PC-3 (cell line): ENCODE measurements at regions of chr3 and their contacts with region 1.

Region 1: DNA sequence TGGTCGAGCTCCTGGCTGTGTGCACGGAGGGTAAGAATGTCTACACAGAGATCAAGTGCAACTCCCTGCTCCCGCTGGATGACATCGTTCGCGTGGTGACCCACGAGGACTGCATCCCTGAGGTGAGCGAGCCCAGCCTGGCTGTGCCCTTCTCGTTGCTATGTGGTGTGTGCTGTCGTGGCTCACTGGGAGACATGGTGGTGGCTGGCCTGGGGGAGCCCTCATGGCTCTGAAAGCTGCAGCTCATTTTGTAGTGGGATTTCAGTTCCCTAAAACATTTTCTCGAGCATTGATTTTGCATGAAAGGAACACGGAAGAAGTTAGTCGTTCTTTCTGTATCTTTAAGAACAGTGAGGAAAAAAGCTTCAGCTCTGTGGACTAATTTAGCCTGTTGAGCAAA is 200.5 kb downstream of the ITPR1 start:
- DNase-seq: no peak
- ATAC-seq: no peak
- H3K4me3 ChIP-seq: no peak overlapping the region
- H3K27ac ChIP-seq: no peak overlapping the region
- H3K4me1 ChIP-seq: peaks cover 27% of the 10 kb centered on the region
- H3K27me3 ChIP-seq: no peaks in the 10 kb centered on the region
- CTCF ChIP-seq: no peak

Region 2: DNA sequence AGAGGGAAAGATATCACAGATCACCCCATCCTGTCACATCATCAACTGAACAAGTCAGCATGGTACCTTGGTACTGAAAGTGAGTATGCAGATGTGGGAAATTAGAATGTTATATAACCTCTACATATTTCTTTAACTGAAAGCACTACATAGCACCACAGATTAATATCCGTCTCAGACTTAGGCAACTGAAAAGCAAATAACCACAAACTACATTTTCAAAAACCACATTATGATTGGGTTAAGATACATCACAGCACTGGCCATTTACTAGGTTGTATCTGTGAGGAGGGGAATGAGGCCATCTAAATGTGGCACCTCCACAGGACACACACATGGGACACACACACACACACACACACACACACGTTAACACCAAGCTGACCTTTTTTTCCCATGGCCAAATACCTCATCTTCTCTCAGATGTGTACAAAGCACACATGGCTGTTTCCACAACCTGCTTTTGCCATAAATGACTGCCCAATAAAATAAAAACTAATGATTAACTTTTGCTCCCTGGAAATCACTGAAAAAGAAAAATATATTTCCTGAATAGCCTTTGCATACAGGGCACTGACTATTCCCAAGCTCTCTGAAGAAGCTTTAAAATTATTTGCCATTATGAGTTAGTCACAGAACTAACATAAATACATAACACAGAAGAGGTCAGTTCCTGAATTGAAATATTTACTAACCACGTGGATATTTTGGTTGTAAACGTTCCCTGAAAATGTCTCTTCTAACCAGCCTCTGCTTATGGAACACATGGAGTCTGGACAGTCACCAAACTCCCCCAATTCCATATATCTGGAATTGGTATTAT is 286.7 kb before region 1 on chr3:
- CTCF ChIA-PET with region 1: no interaction called
- POLR2A ChIA-PET with region 1: no interaction called
- intact Hi-C with region 1: loop called (anchors 5 kb)
- DNase-seq: peak; percentile 76
- ATAC-seq: peak; percentile 86
- H3K4me3 ChIP-seq: no peak overlapping the region; the same call in 1 of the 2 replicates
- H3K27ac ChIP-seq: peak overlapping the region; percentile 91
- H3K4me1 ChIP-seq: peaks cover 53% of the 10 kb centered on the region
- H3K27me3 ChIP-seq: no peaks in the 10 kb centered on the region
- CTCF ChIP-seq: no peak

Region 3: GRCh38 chr3:4656059-4656458 is 37.6 kb before region 1 on chr3:
- CTCF ChIA-PET with region 1: no interaction called
- POLR2A ChIA-PET with region 1: no interaction called
- intact Hi-C with region 1: loop called (anchors 2 kb)
- DNase-seq: peak; percentile 83
- ATAC-seq: peak; percentile 98
- H3K4me3 ChIP-seq: no peak overlapping the region
- H3K27ac ChIP-seq: no peak overlapping the region
- H3K4me1 ChIP-seq: peaks cover 4% of the 10 kb centered on the region
- H3K27me3 ChIP-seq: no peaks in the 10 kb centered on the region
- CTCF ChIP-seq: peak; percentile 98

Region 4: GRCh38 chr3:4712143-4712542 is 18.5 kb after region 1 on chr3:
- CTCF ChIA-PET with region 1: interaction called, 5 read pairs
- POLR2A ChIA-PET with region 1: interaction called, 6 read pairs
- intact Hi-C with region 1: loop called (anchors 1 kb)
- DNase-seq: peak; percentile 55
- ATAC-seq: no peak
- H3K4me3 ChIP-seq: no peak overlapping the region
- H3K27ac ChIP-seq: peak overlapping the region; percentile 18; the same call in 1 of the 2 replicates
- H3K4me1 ChIP-seq: peaks cover 28% of the 10 kb centered on the region
- H3K27me3 ChIP-seq: no peaks in the 10 kb centered on the region
- CTCF ChIP-seq: no peak

Region 5: DNA sequence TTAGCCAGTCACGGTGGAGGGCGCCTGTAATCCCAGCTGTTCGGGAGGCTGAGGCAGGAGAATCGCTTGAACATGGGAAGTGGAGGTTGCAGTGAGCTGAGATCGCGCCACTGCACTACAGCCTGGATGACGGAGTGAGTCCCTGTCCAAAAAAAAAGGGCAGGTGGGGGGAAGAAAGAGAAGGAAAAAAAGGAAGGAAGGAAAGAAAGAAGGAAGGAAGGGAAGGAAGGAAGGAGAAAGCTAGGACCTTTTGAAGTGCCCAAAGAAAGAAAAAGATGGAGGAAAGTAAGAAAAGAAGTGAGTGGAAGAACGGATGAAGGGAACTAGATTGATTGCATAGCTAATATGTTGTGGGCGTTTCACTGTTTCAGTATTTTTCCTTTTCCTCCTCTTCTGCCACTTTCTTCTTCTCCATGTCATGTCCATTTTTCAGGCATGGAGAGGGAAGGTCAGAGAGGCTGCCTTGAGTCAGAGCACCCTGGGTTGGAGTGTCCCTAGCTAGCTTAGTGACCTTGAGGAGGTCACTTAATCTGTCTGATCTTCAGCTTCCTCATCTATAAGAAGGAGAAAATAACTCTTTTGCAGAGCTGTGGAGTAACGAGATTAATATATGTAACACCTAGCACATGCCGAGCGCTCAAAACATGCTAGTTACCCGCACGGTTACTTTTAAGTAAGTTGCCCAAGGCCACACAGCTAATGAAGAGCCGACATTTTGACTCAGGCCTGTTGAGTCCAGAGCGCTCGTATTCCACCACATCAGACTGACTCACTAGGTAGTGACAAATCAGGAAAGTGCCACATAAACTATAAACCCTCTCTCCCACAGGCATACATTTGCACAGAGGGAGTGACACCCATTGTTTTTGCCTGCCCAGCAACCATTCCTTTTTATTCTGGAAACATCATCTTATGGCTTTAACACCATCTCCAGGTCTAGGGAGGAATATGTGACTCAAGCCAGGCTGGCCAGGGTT is 327.8 kb after region 1 on chr3:
- CTCF ChIA-PET with region 1: no interaction called
- POLR2A ChIA-PET with region 1: interaction called, 10 read pairs
- intact Hi-C with region 1: loop called (anchors 1 kb)
- DNase-seq: peak; percentile 96
- ATAC-seq: peak; percentile 73
- H3K4me3 ChIP-seq: peak overlapping the region; percentile 11; the same call in 1 of the 2 replicates
- H3K27ac ChIP-seq: peak overlapping the region; percentile 96
- H3K4me1 ChIP-seq: peaks cover 77% of the 10 kb centered on the region
- H3K27me3 ChIP-seq: no peaks in the 10 kb centered on the region
- CTCF ChIP-seq: peak; percentile 47

Region 6: DNA sequence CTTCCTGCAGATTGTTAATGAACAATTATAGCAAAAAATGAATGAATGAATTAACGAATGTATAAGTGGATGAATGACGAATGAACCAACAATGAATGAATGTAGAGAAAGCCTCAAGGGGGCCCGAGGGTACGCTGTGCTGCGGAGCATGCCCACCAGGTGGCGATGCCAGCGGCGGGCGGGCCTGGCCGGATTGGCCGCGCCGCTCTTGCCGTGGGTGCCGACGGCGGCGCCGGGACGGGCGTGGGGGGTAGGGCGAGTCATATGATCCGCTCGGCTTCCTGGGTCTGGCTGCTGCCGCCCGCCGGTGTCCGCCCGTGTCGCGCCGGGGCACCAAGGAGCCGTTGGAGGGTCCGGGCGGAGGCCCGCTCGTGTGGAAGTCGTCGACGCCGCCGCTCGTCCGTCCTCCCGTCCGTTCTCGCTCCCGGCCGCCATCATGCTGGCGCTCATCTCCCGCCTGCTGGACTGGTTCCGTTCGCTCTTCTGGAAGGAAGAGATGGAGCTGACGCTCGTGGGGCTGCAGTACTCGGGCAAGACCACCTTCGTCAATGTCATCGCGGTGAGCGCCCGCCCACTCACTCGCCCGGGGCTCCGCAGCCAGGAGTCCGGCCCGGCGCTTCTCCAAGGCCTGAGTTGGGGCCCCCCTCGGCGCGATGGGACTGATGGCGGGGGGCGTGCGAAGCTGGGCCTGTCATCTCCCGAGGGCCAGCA is 428.6 kb after region 1 on chr3 and contains the start of gene ARL8B:
- CTCF ChIA-PET with region 1: no interaction called
- POLR2A ChIA-PET with region 1: no interaction called
- intact Hi-C with region 1: loop called (anchors 2 kb)
- DNase-seq: peak; percentile 94
- ATAC-seq: peak; percentile 86
- H3K4me3 ChIP-seq: peak within 1 kb of the TSS; percentile 93
- H3K27ac ChIP-seq: peak within 1 kb of the TSS; percentile 78
- H3K4me1 ChIP-seq: peaks cover 31% of the 10 kb centered on the region
- H3K27me3 ChIP-seq: no peaks in the 10 kb centered on the region
- CTCF ChIP-seq: peak; percentile 98
- total RNA-seq, gene ARL8B: 43.8 and 45.3 TPM in 2 replicates

Region 7: GRCh38 chr3:5194341-5195159 is 500.9 kb after region 1 on chr3:
- CTCF ChIA-PET with region 1: no interaction called
- POLR2A ChIA-PET with region 1: no interaction called
- intact Hi-C with region 1: loop called (anchors 2 kb)
- DNase-seq: peak; percentile 95
- ATAC-seq: peak; percentile 84
- H3K4me3 ChIP-seq: 0 out of 2 replicates have a peak overlapping the region, but pooled peaks have one; percentile 19
- H3K27ac ChIP-seq: peak overlapping the region; percentile 76
- H3K4me1 ChIP-seq: peaks cover 71% of the 10 kb centered on the region
- H3K27me3 ChIP-seq: no peaks in the 10 kb centered on the region
- CTCF ChIP-seq: no peak